OCI-LY7 (cell line): ENCODE measurements at regions of chr6 and their contacts with region 1.

Region 1: DNA sequence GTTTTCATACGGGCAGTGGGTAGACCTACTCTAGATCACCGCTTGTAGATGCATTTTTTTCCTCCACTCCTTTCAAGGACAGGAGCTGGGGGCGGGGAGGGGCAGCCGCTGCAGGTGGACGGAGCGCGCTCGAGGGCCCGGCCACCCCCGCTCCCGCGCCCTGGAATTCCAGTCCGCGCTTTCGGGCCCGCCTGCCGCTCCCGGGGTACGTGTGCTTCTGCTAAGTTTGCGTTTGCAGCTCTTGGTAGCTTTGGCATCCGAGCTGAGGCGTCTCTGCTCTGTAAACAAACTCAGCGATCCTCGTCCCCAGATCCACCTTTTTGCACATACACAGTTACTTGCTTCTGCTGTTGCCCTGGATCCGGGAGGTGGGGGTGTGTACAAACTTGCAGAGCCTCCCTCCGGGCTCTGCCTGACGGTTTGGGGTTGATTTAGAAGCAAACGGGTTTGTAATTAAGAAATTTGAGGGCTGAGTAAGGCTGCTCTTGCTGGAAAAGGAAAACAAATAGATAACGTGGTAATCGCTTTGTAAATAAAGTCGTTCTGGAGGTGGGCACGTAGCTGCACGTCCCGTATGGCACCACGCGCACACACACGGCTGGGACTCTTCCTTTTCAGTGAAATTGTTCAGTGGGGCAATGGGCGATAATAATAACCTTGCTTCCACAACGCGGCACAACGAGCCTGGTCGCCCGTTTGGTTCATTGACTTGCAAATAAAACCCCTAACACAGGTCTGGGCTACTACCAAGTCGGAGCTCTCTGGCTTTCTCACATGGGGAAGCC is 976 bp upstream of the CITED2 start:
- DNase-seq: peak; percentile 95
- H3K4me3 ChIP-seq: peak overlapping the region; percentile 92
- H3K27ac ChIP-seq: peak overlapping the region; percentile 92
- H3K4me1 ChIP-seq: peaks cover 23% of the 10 kb centered on the region
- CTCF ChIP-seq: no peak

Region 2: DNA sequence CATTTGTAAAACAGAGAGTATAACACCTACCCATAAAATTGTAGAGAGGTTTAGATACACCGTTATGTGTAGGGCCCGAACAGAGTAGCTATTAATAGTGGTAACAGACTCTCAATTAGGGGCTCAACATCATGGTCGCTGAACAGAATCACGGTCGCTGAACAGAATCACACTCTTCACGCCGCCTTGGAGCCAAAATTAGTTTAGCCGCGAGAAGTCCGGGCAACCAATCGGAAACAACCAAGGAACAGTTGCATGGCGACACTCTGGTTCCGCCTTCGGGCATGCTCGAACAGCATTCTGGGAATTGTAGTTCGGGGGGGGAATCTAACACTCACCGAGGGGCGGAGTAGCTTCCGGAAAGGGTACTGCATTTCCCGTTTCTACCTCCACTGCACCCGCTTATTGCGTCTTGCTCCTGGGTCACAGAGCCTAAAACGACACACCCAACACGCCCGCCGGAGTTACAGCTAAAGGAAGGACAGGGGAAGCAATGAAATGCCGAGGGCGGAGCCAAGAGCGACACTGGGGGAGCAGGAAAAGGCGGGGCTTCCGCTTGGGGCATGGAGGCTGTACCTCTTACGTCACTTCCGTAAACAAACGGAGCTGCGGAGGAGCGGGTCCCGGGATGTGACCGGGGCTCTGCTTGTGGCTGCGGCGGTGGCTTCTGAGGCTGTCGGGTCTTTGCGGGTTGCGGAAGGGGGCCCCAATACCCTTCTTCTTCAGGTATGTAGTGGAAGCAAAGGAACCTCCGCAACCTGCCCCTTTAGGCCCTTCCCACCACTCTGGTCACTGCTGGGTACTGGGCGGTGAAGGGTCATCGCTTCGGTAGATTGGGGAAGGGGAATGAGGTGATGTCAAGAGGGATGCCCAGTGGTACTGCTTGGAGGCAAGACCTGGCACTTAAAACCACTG is 602.0 kb before region 1 on chr6 and contains the start of gene CCDC28A:
- CTCF ChIA-PET with region 1: no interaction called
- POLR2A ChIA-PET with region 1: interaction called, 6 read pairs
- intact Hi-C with region 1: loop called (anchors 5 kb)
- DNase-seq: peak; percentile 98
- H3K4me3 ChIP-seq: peak within 1 kb of the TSS; percentile 99
- H3K27ac ChIP-seq: peak within 1 kb of the TSS; percentile 83
- H3K4me1 ChIP-seq: peaks cover 20% of the 10 kb centered on the region
- CTCF ChIP-seq: no peak
- total RNA-seq, gene CCDC28A: 11.0 and 13.5 TPM in 2 replicates

Region 3: DNA sequence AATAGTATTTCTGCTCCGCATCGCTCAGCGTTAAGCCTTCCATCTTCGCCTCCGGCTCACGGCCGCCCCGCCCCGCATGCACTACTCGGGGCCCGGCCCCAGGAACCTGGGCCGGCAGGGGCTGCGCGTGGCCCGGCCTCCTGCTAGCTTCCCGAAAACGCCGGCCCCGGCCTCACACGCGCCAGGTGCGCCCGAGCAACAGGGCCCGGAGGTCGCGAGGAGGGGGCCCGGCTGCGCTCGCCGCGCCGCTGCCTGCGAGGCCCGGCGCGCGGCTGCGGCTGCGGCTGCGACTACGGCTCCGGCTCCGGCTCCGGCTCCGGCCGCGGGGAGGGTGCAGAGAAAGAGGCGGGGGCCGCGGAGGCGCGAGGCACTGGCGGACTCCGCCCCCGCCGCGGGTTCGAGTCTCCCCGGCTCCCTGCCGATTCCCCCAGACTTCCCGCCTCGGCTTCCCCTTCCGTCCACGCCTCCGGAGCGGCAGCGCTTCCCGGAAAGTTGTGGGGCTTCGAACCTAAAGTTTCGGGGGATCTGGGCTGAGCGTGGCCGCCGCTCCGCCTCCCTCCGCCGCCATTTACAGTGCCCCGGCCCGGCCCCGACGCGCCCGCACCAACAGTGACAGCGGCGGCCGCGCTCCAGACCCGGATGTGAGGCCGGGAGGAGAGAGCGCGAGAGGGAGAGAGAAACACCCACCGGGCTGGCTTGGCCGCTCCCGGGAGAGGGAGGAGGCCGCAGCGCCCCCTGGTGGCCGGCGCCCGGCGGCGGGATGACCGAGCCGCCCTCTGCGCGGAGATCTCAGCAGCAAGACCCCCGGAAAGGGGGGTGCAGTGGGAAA is 387.6 kb before region 1 on chr6 and contains the start of gene REPS1:
- CTCF ChIA-PET with region 1: no interaction called
- POLR2A ChIA-PET with region 1: interaction called, 6 read pairs
- intact Hi-C with region 1: loop called (anchors 2 kb)
- DNase-seq: peak; percentile 94
- H3K4me3 ChIP-seq: peak within 1 kb of the TSS; percentile 87
- H3K27ac ChIP-seq: peak within 1 kb of the TSS; percentile 67
- H3K4me1 ChIP-seq: peaks cover 33% of the 10 kb centered on the region
- CTCF ChIP-seq: peak; percentile 90
- total RNA-seq, gene REPS1: 29.0 and 40.0 TPM in 2 replicates

Region 4: GRCh38 chr6:139219271-139219729 is 156.1 kb before region 1 on chr6:
- CTCF ChIA-PET with region 1: interaction called, 9 read pairs
- POLR2A ChIA-PET with region 1: interaction called, 25 read pairs
- intact Hi-C with region 1: no loop called
- DNase-seq: peak; percentile 96
- H3K4me3 ChIP-seq: peak overlapping the region; percentile 60
- H3K27ac ChIP-seq: peak overlapping the region; percentile 63
- H3K4me1 ChIP-seq: peaks cover 26% of the 10 kb centered on the region
- CTCF ChIP-seq: peak; percentile 98

Region 5: GRCh38 chr6:139262519-139263300 is 112.7 kb before region 1 on chr6:
- CTCF ChIA-PET with region 1: interaction called, 4 read pairs
- POLR2A ChIA-PET with region 1: interaction called, 31 read pairs
- intact Hi-C with region 1: no loop called
- DNase-seq: peak; percentile 78
- H3K4me3 ChIP-seq: peak overlapping the region; percentile 50
- H3K27ac ChIP-seq: peak overlapping the region; percentile 88
- H3K4me1 ChIP-seq: peaks cover 63% of the 10 kb centered on the region
- CTCF ChIP-seq: no peak

Region 6: DNA sequence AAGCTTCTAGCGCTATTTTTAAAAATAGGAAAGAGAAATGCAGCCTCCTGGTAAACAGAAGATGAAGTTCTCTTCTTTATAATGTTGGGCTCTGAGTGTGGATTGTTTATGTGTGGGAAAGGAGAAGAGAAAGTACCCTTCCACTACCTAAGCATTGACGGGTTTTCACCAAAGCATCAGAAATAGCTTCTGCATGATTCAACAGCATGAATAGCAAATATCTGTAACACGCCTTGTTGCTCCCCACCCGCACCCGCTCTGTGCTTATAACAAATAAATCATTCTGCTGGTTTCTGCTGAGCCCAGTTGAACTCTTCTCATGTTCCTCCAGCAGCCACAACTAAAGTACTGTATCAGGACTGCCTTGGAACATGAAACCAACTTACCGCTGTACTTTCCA is 104.4 kb before region 1 on chr6:
- CTCF ChIA-PET with region 1: no interaction called
- POLR2A ChIA-PET with region 1: interaction called, 31 read pairs
- intact Hi-C with region 1: no loop called
- DNase-seq: peak; percentile 80
- H3K4me3 ChIP-seq: peak overlapping the region; percentile 63
- H3K27ac ChIP-seq: peak overlapping the region; percentile 89
- H3K4me1 ChIP-seq: peaks cover 89% of the 10 kb centered on the region
- CTCF ChIP-seq: no peak

Region 7: DNA sequence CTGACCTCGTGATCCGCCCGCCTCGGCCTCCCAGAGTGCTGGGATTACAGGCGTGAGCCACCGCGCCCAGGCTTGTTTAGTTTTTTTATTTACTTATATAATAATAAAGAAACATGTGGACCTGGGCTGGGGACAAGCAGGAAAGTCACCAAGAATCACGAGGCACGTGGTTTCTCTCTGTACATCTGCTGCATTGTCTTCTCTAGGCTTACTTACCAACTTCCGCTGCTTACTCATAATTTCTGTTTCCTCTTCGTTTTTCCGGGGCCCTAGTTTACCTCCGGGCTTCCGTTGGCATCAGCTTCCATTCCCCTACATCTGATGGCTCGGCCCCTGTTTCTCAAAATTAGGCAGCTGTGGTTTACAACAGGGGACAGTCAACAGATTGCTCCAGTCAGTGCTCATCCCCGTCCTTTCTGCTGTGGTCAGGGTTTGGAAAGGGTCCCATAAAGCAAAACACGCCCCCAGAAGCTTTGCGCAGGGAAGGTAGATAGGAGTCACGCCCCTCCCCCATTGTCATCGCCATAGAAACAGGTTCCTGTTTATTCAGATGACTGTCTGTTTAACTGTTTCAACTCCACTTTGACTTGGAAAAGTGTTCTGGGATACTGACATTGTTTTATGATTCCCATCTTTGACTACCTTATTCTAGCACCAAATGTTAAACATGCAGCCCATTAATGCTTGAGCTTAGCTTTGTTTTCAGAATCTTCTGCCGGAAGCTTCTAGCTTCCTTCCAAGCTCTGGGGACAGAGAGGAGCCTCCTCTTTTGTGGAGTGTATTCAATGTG is 51.7 kb before region 1 on chr6:
- CTCF ChIA-PET with region 1: interaction called, 3 read pairs
- POLR2A ChIA-PET with region 1: interaction called, 11 read pairs
- intact Hi-C with region 1: no loop called
- DNase-seq: peak; percentile 90
- H3K4me3 ChIP-seq: peak overlapping the region; percentile 61
- H3K27ac ChIP-seq: peak overlapping the region; percentile 97
- H3K4me1 ChIP-seq: peaks cover 78% of the 10 kb centered on the region
- CTCF ChIP-seq: no peak